B cell (primary cell): ENCODE measurements at regions of chr1 and their contacts with region 1.

Region 1: DNA sequence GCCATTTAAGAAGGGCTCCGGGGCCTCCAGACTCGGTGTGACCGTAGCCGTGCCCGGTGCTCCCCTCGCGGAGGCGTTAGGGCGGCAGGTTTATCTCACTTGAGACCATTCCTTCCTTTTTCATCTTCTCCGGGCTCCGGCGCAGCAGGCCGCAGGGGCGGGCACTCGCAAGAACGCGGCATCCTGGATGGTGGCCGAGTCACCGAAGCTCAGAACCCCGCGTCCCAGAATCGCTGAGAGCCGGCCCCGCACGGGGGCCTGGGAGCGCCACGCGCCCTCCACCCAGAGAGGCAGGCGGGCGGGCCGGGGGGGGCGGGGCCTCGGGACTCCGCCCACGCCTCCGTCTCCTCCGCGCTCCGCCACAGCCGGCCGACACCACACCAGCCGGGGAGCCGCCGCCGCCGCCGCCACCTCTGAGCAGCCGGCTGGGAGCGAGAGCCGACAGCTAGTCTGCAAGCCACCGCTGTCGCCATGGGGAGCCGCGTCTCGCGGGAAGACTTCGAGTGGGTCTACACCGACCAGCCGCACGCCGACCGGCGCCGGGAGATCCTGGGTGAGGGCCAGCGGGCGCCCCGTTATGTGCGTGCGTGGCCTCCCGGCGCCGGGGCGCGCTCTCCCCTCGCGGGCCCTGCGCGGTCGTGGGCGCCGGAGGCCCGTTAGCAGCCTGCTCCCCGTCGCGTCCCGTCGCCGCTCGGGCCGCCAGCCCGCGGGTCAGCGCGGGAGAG is at the start of gene DEGS1:
- DNase-seq: peak; percentile 93
- ATAC-seq: peak; percentile 82
- H3K4me3 ChIP-seq: peak within 1 kb of the TSS; percentile 74 to 90 (median 82)
- H3K4me3 Mint-ChIP-seq: peak within 1 kb of the TSS; percentile 93
- H3K27ac ChIP-seq: peak within 1 kb of the TSS; percentile 90 to 99
- H3K27ac Mint-ChIP-seq: peak within 1 kb of the TSS; percentile 94
- H3K4me1 ChIP-seq: peaks cover 41 to 51% of the 10 kb centered on the region in 2 donors
- H3K4me1 Mint-ChIP-seq: peaks cover 36% of the 10 kb centered on the region
- H3K27me3 ChIP-seq: no peaks in the 10 kb centered on the region
- H3K27me3 Mint-ChIP-seq: no peaks in the 10 kb centered on the region
- CTCF ChIP-seq: no peak
- total RNA-seq, gene DEGS1: 51.3 and 52.1 TPM in 2 replicates

Region 2: DNA sequence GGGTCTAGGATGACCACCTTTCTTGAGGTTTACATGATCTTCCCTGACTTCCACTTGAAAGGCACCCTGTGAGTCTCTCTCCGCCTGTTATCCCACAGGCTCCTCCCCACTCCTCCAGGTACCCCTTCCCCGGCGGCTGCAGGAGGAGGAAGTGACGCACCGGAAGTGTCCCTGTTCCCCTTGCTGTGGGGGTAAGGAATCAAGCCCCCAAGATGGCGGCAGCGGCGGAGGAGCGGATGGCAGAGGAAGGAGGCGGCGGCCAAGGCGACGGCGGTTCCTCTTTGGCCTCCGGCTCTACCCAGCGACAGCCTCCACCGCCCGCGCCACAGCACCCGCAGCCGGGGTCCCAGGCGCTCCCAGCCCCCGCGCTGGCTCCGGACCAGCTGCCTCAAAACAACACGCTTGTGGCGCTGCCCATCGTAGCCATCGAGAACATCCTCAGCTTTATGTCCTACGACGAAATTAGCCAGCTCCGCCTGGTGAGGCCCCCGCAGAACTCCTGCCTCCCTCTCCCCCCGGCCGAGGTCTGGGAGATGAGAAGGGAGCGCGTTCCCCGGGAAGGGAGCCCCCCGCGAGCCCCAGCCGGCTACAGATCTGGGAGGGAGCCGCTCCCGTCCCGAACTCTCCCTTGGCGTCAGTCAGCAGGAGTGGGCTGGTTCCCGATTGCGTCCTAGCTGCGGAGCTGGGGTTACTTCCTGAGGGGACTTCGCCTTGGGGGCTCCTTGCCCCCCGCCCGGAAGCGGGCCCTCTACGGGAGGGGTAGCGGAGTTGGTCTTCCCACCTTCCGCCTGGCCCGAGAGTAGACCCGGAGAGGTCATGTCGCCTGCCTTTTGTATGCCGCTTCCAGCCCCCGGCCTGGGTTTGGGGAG is 68.9 kb before region 1 on chr1 and contains the start of gene FBXO28:
- CTCF ChIA-PET with region 1: interaction called, 4 read pairs
- POLR2A ChIA-PET with region 1: no interaction called
- intact Hi-C with region 1: loop called (anchors 1 kb)
- DNase-seq: peak; percentile 93
- ATAC-seq: peak; percentile 92
- H3K4me3 ChIP-seq: peak within 1 kb of the TSS; percentile 78 to 92 (median 86)
- H3K4me3 Mint-ChIP-seq: peak within 1 kb of the TSS; percentile 92
- H3K27ac ChIP-seq: peak within 1 kb of the TSS; percentile 96
- H3K27ac Mint-ChIP-seq: peak within 1 kb of the TSS; percentile 95
- H3K4me1 ChIP-seq: peaks cover 20 to 27% of the 10 kb centered on the region in 2 donors
- H3K4me1 Mint-ChIP-seq: peaks cover 30% of the 10 kb centered on the region
- H3K27me3 ChIP-seq: peaks cover 0 to 5% (median 0%) of the 10 kb centered on the region in 4 experiments
- H3K27me3 Mint-ChIP-seq: peaks cover under 1% of the 10 kb centered on the region
- CTCF ChIP-seq: peak; percentile 17
- total RNA-seq, gene FBXO28: 37.0 and 39.7 TPM in 2 replicates

Region 3: GRCh38 chr1:224203243-224204016 is 20.4 kb after region 1 on chr1:
- CTCF ChIA-PET with region 1: interaction called, 5 read pairs
- POLR2A ChIA-PET with region 1: interaction called, 10 read pairs
- intact Hi-C with region 1: loop called (anchors 2 kb)
- DNase-seq: peak; percentile 82
- ATAC-seq: peak; percentile 85
- H3K4me3 ChIP-seq: peak overlapping the region in 2 of 5 experiments; percentile 16 to 24
- H3K4me3 Mint-ChIP-seq: peak overlapping the region; percentile 76
- H3K27ac ChIP-seq: peak overlapping the region; percentile 24 to 25
- H3K27ac Mint-ChIP-seq: peak overlapping the region; percentile 73
- H3K4me1 ChIP-seq: peaks cover 38 to 40% of the 10 kb centered on the region in 2 donors
- H3K4me1 Mint-ChIP-seq: peaks cover 36% of the 10 kb centered on the region
- H3K27me3 ChIP-seq: no peaks in the 10 kb centered on the region
- H3K27me3 Mint-ChIP-seq: no peaks in the 10 kb centered on the region
- CTCF ChIP-seq: no peak

Region 4: GRCh38 chr1:224213438-224214112 is 30.5 kb after region 1 on chr1:
- CTCF ChIA-PET with region 1: no interaction called
- POLR2A ChIA-PET with region 1: no interaction called
- intact Hi-C with region 1: no loop called
- DNase-seq: no peak
- ATAC-seq: peak; percentile 65
- H3K4me3 ChIP-seq: no peak overlapping the region
- H3K4me3 Mint-ChIP-seq: no peak overlapping the region
- H3K27ac ChIP-seq: no peak overlapping the region
- H3K27ac Mint-ChIP-seq: peak overlapping the region; percentile 8
- H3K4me1 ChIP-seq: peaks cover 0 to 27% of the 10 kb centered on the region in 2 donors
- H3K4me1 Mint-ChIP-seq: peaks cover 22% of the 10 kb centered on the region
- H3K27me3 ChIP-seq: no peaks in the 10 kb centered on the region
- H3K27me3 Mint-ChIP-seq: no peaks in the 10 kb centered on the region
- CTCF ChIP-seq: no peak

Region 5: GRCh38 chr1:224274970-224275626 is 92.1 kb after region 1 on chr1:
- CTCF ChIA-PET with region 1: no interaction called
- POLR2A ChIA-PET with region 1: no interaction called
- intact Hi-C with region 1: loop called (anchors 5 kb)
- DNase-seq: no peak
- ATAC-seq: no peak
- H3K4me3 ChIP-seq: no peak overlapping the region
- H3K4me3 Mint-ChIP-seq: no peak overlapping the region
- H3K27ac ChIP-seq: no peak overlapping the region
- H3K27ac Mint-ChIP-seq: no peak overlapping the region
- H3K4me1 ChIP-seq: no peaks in the 10 kb centered on the region
- H3K4me1 Mint-ChIP-seq: no peaks in the 10 kb centered on the region
- H3K27me3 ChIP-seq: no peaks in the 10 kb centered on the region
- H3K27me3 Mint-ChIP-seq: no peaks in the 10 kb centered on the region
- CTCF ChIP-seq: no peak

Region 6: GRCh38 chr1:224356685-224357625 is 173.9 kb after region 1 on chr1 and contains the start of gene CNIH4:
- CTCF ChIA-PET with region 1: no interaction called
- POLR2A ChIA-PET with region 1: no interaction called
- intact Hi-C with region 1: loop called (anchors 1 kb)
- DNase-seq: peak; percentile 94
- ATAC-seq: peak; percentile 98
- H3K4me3 ChIP-seq: peak within 1 kb of the TSS; percentile 69 to 88 (median 82)
- H3K4me3 Mint-ChIP-seq: peak within 1 kb of the TSS; percentile 86
- H3K27ac ChIP-seq: peak within 1 kb of the TSS; percentile 34 to 61
- H3K27ac Mint-ChIP-seq: peak within 1 kb of the TSS; percentile 92
- H3K4me1 ChIP-seq: peaks cover 9 to 14% of the 10 kb centered on the region in 2 donors
- H3K4me1 Mint-ChIP-seq: peaks cover 22% of the 10 kb centered on the region
- H3K27me3 ChIP-seq: no peaks in the 10 kb centered on the region
- H3K27me3 Mint-ChIP-seq: no peaks in the 10 kb centered on the region
- CTCF ChIP-seq: no peak
- total RNA-seq, gene CNIH4: 27.2 and 31.5 TPM in 2 replicates